ENCODE measurements at regions of chr19 and their contacts with region 1.

Region 1: GRCh38 chr19:42075616-42076379 is at the start of gene ZNF574:
- DNase-seq: peak; percentile 96 to 99
- H3K4me3 ChIP-seq: peak within 1 kb of the TSS; percentile 75 to 84
- H3K27ac ChIP-seq: peak within 1 kb of the TSS; percentile 93
- H3K4me1 ChIP-seq: peaks cover 5 to 15% of the 10 kb centered on the region in 2 donors
- H3K27me3 ChIP-seq: no peaks in the 10 kb centered on the region
- CTCF ChIP-seq: no peak
- total RNA-seq, gene ZNF574: 14.9 TPM

Region 2: DNA sequence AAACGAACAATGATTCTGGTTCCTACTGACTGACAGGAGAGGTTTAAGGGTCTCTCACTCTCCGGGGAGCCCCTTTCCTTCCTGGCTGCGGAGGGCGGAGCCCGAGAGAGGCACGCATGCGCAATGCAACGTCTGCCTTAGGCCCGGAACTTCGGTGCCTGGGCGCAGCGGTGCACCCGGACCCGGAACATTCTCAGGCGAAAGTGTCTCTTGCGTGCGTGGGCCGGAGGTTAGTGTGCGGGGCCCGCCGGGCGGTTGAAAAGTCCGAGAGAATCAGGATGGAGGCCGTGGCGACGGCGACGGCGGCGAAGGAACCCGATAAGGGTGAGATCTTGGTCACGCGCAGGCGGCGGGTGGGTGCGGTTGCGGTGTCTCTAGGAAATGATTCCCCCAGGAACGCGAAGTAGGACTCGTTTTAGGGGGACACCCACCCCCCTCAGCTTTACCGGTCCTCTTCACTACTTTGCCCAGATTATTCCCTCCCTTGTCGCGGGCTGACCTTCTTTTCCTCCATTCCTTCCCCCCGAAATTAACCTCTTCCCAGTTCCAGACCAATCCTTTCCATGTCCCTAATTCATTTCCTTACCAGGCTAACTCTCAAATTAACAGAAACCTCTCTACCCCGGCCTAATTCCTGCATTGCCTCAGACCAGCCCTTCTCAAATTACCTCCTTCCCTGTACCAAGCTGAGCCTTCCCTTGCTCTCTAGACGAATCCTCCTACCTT is 765.6 kb before region 1 on chr19 and contains the start of gene CCDC97:
- intact Hi-C with region 1: loop called (anchors 5 kb)
- DNase-seq: peak in 1 of 2 donors; percentile 89
- H3K4me3 ChIP-seq: peak within 1 kb of the TSS; percentile 55 to 86
- H3K27ac ChIP-seq: peak within 1 kb of the TSS; percentile 93 to 96
- H3K4me1 ChIP-seq: peaks cover 8 to 19% of the 10 kb centered on the region in 2 donors
- H3K27me3 ChIP-seq: no peaks in the 10 kb centered on the region
- CTCF ChIP-seq: no peak
- total RNA-seq, gene CCDC97: 18.4 TPM

Region 3: GRCh38 chr19:41706741-41707501 is 368.9 kb before region 1 on chr19:
- intact Hi-C with region 1: no loop called
- DNase-seq: no peak
- H3K4me3 ChIP-seq: no peak overlapping the region
- H3K27ac ChIP-seq: no peak overlapping the region
- H3K4me1 ChIP-seq: no peaks in the 10 kb centered on the region
- H3K27me3 ChIP-seq: no peaks in the 10 kb centered on the region
- CTCF ChIP-seq: peak in 2 of 3 experiments; percentile 3 to 19

Region 4: DNA sequence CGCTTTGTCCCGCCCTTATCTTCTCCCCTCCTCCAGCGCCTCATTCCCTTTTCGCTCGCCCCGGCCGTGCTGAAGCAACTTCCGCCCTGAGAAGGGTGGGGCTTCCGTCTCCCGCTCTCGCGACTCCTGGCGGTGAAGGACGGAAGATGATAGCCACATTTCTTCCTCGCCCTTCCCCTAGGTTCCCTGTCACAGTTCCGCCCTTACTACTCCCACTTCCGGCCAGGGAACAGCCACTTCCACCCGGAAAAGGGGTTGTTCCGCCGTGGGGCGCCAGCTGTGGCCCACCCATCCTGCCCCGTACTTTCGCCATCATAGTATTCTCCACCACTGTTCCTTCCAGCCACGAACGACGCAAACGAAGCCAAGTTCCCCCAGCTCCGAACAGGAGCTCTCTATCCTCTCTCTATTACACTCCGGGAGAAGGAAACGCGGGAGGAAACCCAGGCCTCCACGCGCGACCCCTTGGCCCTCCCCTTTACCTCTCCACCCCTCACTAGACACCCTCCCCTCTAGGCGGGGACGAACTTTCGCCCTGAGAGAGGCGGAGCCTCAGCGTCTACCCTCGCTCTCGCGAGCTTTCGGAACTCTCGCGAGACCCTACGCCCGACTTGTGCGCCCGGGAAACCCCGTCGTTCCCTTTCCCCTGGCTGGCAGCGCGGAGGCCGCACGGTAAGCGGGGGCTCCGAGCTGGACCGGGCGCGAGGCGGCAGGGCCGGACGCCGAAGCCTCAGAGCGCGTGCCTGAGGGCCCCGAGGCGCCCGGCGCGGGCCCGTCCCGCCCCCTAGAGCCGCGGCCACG is 216.0 kb before region 1 on chr19 and contains the start of gene RPS19:
- intact Hi-C with region 1: loop called (anchors 5 kb)
- DNase-seq: peak; percentile 92 to 99
- H3K4me3 ChIP-seq: peak within 1 kb of the TSS; percentile 83 to 99
- H3K27ac ChIP-seq: peak within 1 kb of the TSS; percentile 92 to 95
- H3K4me1 ChIP-seq: peaks cover 23 to 27% of the 10 kb centered on the region in 2 donors
- H3K27me3 ChIP-seq: no peaks in the 10 kb centered on the region
- CTCF ChIP-seq: peak; percentile 60 to 63 (median 60)
- total RNA-seq, gene RPS19: 956 TPM

Region 5: GRCh38 chr19:41959056-41960053 is 116.4 kb before region 1 on chr19 and contains the start of gene RABAC1:
- intact Hi-C with region 1: loop called (anchors 2 kb)
- DNase-seq: peak; percentile 64 to 95
- H3K4me3 ChIP-seq: peak within 1 kb of the TSS; percentile 83 to 96
- H3K27ac ChIP-seq: peak within 1 kb of the TSS; percentile 92 to 93
- H3K4me1 ChIP-seq: peaks cover 3 to 9% of the 10 kb centered on the region in 2 donors
- H3K27me3 ChIP-seq: no peaks in the 10 kb centered on the region
- CTCF ChIP-seq: no peak
- total RNA-seq, gene RABAC1: 360 TPM

Region 6: DNA sequence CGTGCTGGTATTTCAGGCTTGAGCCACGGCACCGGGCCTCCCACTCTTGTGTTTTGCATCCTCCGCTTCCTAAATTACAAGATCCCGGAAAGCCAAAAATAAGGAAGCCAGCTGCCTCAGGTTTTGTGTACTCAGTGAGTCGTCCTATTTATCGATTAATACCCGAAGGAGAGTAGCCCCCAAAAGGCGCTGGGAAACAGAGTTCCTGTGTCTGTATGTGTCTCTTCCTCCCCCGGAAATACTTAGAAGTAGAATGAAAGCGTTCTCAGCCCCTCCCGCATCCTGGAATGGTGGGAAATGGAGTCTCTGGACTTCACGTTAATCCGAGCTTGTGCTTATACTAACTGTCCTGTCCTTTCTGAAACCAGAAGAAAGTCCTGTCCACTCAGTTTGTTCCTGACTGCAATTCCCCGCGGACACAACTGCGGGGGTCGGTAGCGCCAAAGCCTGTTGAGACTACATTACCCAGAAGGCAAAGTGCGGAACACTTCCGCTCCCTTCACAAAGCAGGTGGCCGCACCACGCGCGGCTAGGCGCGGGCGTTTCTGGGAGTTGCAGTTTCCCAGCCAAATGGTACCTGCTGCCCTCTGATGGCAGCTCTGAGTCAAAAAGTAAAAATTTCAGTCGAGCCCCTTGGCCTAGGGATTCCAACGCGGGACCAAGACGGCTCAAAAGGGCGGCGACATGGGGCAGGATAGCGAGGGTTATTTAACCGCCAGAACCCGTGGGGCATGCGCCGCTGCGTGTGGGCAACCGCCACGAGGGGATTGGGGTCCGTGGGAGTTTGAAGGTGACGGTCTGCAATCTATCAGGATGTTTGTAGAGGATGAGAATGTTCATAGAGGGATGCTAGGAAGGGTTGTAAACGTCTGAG is 168.8 kb after region 1 on chr19:
- intact Hi-C with region 1: loop called (anchors 5 kb)
- DNase-seq: peak; percentile 69 to 97
- H3K4me3 ChIP-seq: peak overlapping the region; percentile 93 to 95
- H3K27ac ChIP-seq: peak overlapping the region; percentile 84 to 97
- H3K4me1 ChIP-seq: peaks cover 16 to 47% of the 10 kb centered on the region in 2 donors
- H3K27me3 ChIP-seq: no peaks in the 10 kb centered on the region
- CTCF ChIP-seq: peak; percentile 65 to 67 (median 66)

Measured in ascending aorta (tissue), 2 donors.